Right cardiac atrium (tissue), 5 donors: ENCODE measurements at regions of chr13 and their contacts with region 1.

Region 1: DNA sequence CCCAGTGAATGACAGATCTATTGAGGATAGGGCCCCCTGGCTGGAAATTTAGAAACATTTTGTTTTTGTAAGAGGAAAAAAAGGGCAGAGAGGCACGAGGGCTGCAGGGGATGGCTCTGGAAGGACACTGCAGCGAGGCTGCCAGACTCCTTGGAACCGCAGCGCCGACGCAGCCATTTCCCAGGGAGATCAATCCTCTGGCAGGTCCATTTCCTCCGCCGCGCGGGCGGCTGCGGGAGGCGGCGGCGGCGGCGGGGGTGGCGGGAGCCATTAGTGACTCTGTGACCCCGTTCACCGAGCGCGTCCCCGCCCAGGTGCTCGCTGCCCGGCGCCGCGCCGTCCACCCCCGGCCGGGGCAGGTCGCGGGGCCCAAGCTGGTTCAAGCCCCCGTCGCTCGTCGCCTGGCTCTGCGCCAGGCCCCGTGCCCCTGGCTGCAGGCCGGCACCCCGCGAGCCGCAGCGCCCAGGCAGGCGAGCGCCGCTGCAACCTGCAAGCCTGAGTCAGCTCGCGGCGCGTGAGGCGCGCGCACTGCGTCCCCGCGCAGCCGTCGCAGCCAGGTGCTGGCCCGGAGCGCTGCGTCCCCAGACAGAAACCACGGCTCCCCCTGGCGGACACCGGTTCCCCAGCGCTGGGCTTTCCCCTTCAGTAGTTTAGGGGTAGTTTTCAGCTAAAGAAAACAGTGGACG is 192.6 kb downstream of the KATNAL1 start:
- DNase-seq: peak; percentile 88 to 97 (median 95)
- ATAC-seq: peak; percentile 83 to 87
- H3K4me3 ChIP-seq: peak overlapping the region; percentile 67
- H3K27ac ChIP-seq: no peak overlapping the region
- H3K4me1 ChIP-seq: peaks cover 4% of the 10 kb centered on the region
- H3K27me3 ChIP-seq: no peaks in the 10 kb centered on the region

Region 2: DNA sequence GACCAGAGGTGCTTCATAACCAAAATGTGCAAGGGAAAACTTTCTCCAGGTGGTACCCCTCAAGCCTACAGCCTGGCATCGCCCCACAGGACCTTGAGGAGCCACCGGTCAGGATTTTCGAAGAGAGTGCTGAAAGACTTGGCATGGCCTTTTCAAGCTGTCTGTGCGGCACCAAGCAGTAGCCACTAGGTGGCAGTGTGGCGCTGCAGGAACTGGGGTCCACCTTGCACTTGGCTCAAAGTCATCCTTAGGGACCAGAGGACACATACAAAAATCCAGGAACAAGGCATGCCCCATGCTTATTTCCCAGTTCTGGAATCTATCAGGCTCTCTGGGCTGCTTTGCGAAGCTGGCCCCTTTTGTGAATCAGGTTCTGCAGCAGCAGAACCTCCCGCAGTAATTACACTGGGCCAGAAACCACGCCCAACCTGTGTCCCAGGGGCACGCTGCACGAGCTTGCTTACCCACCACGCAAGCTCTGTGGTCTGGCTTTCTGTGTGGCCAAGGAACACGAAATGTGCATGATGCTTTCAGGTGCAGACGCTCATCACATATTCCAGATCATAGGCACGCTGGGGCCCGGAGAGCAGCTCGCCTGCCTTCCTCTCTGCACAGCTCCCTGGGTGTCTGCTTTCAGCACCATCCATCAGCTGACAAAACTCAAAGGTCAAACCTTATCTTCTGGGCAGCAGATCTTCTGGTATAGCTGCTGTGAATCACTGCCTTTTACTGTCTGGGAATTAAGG is 606.4 kb before region 1 on chr13:
- intact Hi-C with region 1: loop called (anchors 5 kb)
- DNase-seq: peak; percentile 86 to 95 (median 95)
- ATAC-seq: peak; percentile 83 to 84
- H3K4me3 ChIP-seq: no peak overlapping the region
- H3K27ac ChIP-seq: peak overlapping the region; percentile 3
- H3K4me1 ChIP-seq: no peaks in the 10 kb centered on the region
- H3K27me3 ChIP-seq: no peaks in the 10 kb centered on the region

Region 3: GRCh38 chr13:29513397-29514322 is 601.1 kb before region 1 on chr13:
- intact Hi-C with region 1: loop called (anchors 5 kb)
- DNase-seq: no peak
- ATAC-seq: peak; percentile 9 to 45
- H3K4me3 ChIP-seq: no peak overlapping the region
- H3K27ac ChIP-seq: no peak overlapping the region
- H3K4me1 ChIP-seq: no peaks in the 10 kb centered on the region
- H3K27me3 ChIP-seq: no peaks in the 10 kb centered on the region

Region 4: DNA sequence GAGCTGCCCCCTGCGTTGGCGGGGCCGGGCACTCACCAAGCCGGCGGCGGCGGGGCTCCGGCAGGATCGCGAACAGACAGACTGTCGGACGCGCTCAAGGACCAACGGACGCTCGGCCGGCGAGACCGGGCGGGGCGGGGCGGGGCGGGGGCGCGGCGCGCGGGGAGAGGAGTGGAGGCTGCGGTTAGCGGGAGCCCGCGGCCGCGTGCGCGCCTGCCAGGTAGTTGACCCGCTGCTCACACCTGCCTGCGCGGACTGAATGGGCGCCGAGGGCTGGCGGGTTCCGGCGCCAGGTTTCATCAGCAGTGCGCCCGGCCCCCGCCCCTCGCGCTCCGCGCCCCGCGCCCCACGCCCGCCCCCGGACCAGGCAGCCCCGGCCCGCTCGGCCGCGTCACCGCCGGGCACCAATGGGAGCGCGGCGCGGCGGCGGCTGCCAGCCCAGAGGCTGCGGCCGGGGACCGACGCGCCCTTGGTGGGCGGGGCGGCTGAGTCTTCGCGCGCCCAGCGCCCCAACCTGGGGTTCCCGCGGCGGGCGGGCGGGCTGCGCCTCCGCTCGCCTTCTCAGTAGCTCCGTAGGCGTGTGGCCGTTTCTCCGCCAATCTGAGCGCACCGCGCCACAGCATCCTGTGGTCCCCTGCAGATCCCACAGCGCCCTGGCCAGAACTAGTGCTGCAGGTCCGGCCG is 519.2 kb before region 1 on chr13 and contains the start of gene SLC7A1:
- intact Hi-C with region 1: loop called in 1 of 4 experiments (anchors 5 kb)
- DNase-seq: peak; percentile 83 to 91 (median 90)
- ATAC-seq: peak; percentile 92 to 95
- H3K4me3 ChIP-seq: peak within 1 kb of the TSS; percentile 88
- H3K27ac ChIP-seq: peak within 1 kb of the TSS; percentile 65
- H3K4me1 ChIP-seq: no peaks in the 10 kb centered on the region
- H3K27me3 ChIP-seq: no peaks in the 10 kb centered on the region
- total RNA-seq, gene SLC7A1: 10.4 to 43.1 (median 13.9) TPM

Region 5: DNA sequence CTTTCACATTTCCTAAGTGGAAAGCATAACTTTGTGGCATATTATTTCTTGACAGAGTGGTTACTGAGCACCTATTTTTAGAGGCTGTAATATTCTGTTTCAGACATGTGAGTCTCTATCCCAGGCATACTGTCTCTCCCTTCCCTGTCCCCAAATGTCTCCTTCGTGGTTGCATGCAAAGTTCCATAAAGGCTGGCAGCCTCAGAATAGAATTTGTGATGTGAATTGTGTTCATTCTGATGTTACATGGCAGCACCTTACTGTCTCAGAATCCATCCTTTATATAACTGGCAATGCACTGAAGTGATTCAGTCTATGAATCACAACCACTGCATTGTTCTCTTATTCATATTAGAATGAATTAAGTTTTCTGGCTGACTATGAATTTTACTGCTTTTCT is 430.3 kb before region 1 on chr13:
- intact Hi-C with region 1: no loop called
- DNase-seq: no peak
- ATAC-seq: no peak
- H3K4me3 ChIP-seq: no peak overlapping the region
- H3K27ac ChIP-seq: no peak overlapping the region
- H3K4me1 ChIP-seq: no peaks in the 10 kb centered on the region
- H3K27me3 ChIP-seq: no peaks in the 10 kb centered on the region

Region 6: GRCh38 chr13:29771247-29771646 is 343.5 kb before region 1 on chr13:
- intact Hi-C with region 1: loop called (anchors 5 to 10 kb)
- DNase-seq: no peak
- ATAC-seq: no peak
- H3K4me3 ChIP-seq: no peak overlapping the region
- H3K27ac ChIP-seq: no peak overlapping the region
- H3K4me1 ChIP-seq: no peaks in the 10 kb centered on the region
- H3K27me3 ChIP-seq: no peaks in the 10 kb centered on the region

Region 7: DNA sequence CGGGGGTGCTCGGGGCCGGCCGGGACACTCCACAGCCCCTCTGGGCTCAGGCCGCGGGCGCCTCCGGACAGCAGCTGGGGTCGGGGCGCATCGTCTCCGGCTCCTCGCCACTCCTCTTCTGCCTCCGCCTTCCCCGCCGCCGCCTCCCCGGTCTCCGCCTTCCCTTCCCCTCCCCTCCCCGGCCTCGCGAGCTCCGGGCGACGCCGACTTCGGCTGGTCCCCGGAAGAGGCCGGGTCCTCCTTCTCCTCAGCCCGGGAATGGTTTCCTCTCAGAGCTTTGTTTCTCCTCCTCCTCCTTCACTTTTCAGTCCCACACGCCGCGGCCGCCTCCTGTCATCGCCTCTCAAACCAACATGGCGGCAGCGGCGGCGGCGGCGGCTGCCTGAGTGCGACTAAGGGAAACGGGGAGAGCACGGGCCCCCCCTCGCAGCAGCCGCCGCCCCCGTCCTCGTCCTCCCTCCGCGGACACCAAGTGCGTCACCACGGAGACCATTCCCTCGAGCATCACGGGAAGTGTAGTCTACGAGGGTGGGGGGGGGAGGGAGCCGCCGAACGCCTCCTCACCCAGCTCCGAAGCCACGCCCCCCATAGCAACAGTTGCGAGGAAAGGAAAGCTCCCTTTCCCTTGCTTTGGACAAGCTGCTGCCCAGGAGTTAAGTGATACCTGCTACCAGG is 264.4 kb before region 1 on chr13 and contains the start of gene UBL3:
- intact Hi-C with region 1: loop called (anchors 5 to 10 kb)
- DNase-seq: peak; percentile 97 to 98 (median 98)
- ATAC-seq: peak; percentile 98
- H3K4me3 ChIP-seq: peak within 1 kb of the TSS; percentile 88
- H3K27ac ChIP-seq: peak within 1 kb of the TSS; percentile 98
- H3K4me1 ChIP-seq: no peaks in the 10 kb centered on the region
- H3K27me3 ChIP-seq: no peaks in the 10 kb centered on the region
- total RNA-seq, gene UBL3: 23.5 to 25.8 (median 24.9) TPM

Region 8: GRCh38 chr13:29923554-29924481 is 190.9 kb before region 1 on chr13:
- intact Hi-C with region 1: loop called in 1 of 4 experiments (anchors 10 kb)
- DNase-seq: peak; percentile 84 to 89 (median 85)
- ATAC-seq: peak; percentile 87 to 93
- H3K4me3 ChIP-seq: no peak overlapping the region
- H3K27ac ChIP-seq: peak overlapping the region; percentile 55
- H3K4me1 ChIP-seq: peaks cover 8% of the 10 kb centered on the region
- H3K27me3 ChIP-seq: no peaks in the 10 kb centered on the region

Region 9: GRCh38 chr13:30153545-30154441 is 39.1 kb after region 1 on chr13:
- intact Hi-C with region 1: no loop called
- DNase-seq: no peak
- ATAC-seq: no peak
- H3K4me3 ChIP-seq: no peak overlapping the region
- H3K27ac ChIP-seq: no peak overlapping the region
- H3K4me1 ChIP-seq: no peaks in the 10 kb centered on the region
- H3K27me3 ChIP-seq: no peaks in the 10 kb centered on the region